ENCODE measurements at regions of chr16 and their contacts with region 1.

Region 1: GRCh38 chr16:29700253-29700987 is 21.4 kb downstream of the QPRT start:
- DNase-seq: peak; percentile 77 to 88 (median 87)
- ATAC-seq: peak; percentile 72 to 87
- H3K4me3 ChIP-seq: no peak overlapping the region
- H3K27ac ChIP-seq: no peak overlapping the region
- H3K4me1 ChIP-seq: no peaks in the 10 kb centered on the region
- H3K27me3 ChIP-seq: no peaks in the 10 kb centered on the region

Region 2: DNA sequence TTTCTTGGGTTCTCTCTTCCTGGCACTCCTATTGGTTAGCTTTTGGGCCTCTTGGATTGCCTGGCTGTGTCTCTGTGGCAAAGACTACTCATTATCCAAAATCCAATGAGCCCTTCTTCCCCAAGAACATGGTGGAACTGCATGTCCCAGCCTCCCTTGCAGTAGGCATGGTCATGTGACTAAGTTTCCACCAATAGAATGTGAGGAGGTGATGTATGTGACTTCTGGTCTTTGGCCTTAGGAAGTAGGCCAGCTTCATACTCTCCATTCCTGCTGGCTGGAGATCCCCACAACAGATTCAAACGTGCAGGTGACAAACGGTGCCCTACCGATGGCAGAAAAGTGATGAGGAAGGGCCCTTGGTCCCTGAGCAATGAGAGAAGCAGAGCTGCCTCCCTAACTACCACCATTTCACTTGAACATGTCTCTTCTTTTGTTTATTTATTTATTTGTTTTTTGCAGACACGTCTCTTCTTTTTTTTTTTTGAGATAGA is 54.7 kb before region 1 on chr16:
- intact Hi-C with region 1: loop called in 1 of 4 experiments (anchors 10 kb)
- DNase-seq: no peak
- ATAC-seq: no peak
- H3K4me3 ChIP-seq: no peak overlapping the region
- H3K27ac ChIP-seq: no peak overlapping the region
- H3K4me1 ChIP-seq: no peaks in the 10 kb centered on the region
- H3K27me3 ChIP-seq: no peaks in the 10 kb centered on the region

Region 3: GRCh38 chr16:29831490-29831889 is 131.1 kb after region 1 on chr16:
- intact Hi-C with region 1: no loop called
- DNase-seq: no peak
- ATAC-seq: peak in 1 of 2 donors; percentile 16
- H3K4me3 ChIP-seq: no peak overlapping the region
- H3K27ac ChIP-seq: no peak overlapping the region
- H3K4me1 ChIP-seq: no peaks in the 10 kb centered on the region
- H3K27me3 ChIP-seq: no peaks in the 10 kb centered on the region

Region 4: GRCh38 chr16:30018731-30019158 is 318.3 kb after region 1 on chr16:
- intact Hi-C with region 1: loop called in 3 of 4 experiments (anchors 5 to 10 kb)
- DNase-seq: no peak
- ATAC-seq: no peak
- H3K4me3 ChIP-seq: no peak overlapping the region
- H3K27ac ChIP-seq: no peak overlapping the region
- H3K4me1 ChIP-seq: no peaks in the 10 kb centered on the region
- H3K27me3 ChIP-seq: no peaks in the 10 kb centered on the region

Measured in right cardiac atrium (tissue), 5 donors.